Activated T-helper 1 cell treated with anti-CD3 and anti-CD28 coated beads, Interleukin-12 subunit alpha, Interleukin-12 subunit beta, Interleukin-2, Interleukin-4 antibody, amounts not matched to agents 30 ng/mL and 10 ng/mL and 1 ng/mL, durations not matched to agents 14 hours and 24 hours and 36 hours (primary cell): ENCODE measurements at regions of chr6 and their contacts with region 1.

Region 1: GRCh38 chr6:15245361-15246216 is at the start of gene JARID2:
- DNase-seq: peak; percentile 92
- H3K4me3 Mint-ChIP-seq: peak within 1 kb of the TSS; percentile 98
- H3K27ac Mint-ChIP-seq: peak within 1 kb of the TSS; percentile 96
- H3K4me1 Mint-ChIP-seq: peaks cover 17% of the 10 kb centered on the region
- H3K27me3 Mint-ChIP-seq: no peaks in the 10 kb centered on the region
- total RNA-seq, gene JARID2: 60.5 and 62.5 TPM in 2 replicates

Region 2: GRCh38 chr6:14075095-14075503 is 1170.5 kb before region 1 on chr6:
- intact Hi-C with region 1: loop called (anchors 5 kb)
- DNase-seq: peak; percentile 25
- H3K4me3 Mint-ChIP-seq: peak overlapping the region; percentile 84
- H3K27ac Mint-ChIP-seq: peak overlapping the region; percentile 94
- H3K4me1 Mint-ChIP-seq: peaks cover 68% of the 10 kb centered on the region
- H3K27me3 Mint-ChIP-seq: no peaks in the 10 kb centered on the region

Region 3: GRCh38 chr6:14276667-14277404 is 968.8 kb before region 1 on chr6:
- intact Hi-C with region 1: loop called (anchors 5 kb)
- DNase-seq: peak; percentile 31
- H3K4me3 Mint-ChIP-seq: peak overlapping the region; percentile 24
- H3K27ac Mint-ChIP-seq: peak overlapping the region; percentile 72
- H3K4me1 Mint-ChIP-seq: peaks cover 33% of the 10 kb centered on the region
- H3K27me3 Mint-ChIP-seq: no peaks in the 10 kb centered on the region

Region 4: GRCh38 chr6:14542670-14543366 is 702.8 kb before region 1 on chr6:
- intact Hi-C with region 1: loop called (anchors 5 kb)
- DNase-seq: peak; percentile 10
- H3K4me3 Mint-ChIP-seq: no peak overlapping the region
- H3K27ac Mint-ChIP-seq: peak overlapping the region; percentile 64
- H3K4me1 Mint-ChIP-seq: peaks cover 26% of the 10 kb centered on the region
- H3K27me3 Mint-ChIP-seq: peaks cover 1% of the 10 kb centered on the region

Region 5: DNA sequence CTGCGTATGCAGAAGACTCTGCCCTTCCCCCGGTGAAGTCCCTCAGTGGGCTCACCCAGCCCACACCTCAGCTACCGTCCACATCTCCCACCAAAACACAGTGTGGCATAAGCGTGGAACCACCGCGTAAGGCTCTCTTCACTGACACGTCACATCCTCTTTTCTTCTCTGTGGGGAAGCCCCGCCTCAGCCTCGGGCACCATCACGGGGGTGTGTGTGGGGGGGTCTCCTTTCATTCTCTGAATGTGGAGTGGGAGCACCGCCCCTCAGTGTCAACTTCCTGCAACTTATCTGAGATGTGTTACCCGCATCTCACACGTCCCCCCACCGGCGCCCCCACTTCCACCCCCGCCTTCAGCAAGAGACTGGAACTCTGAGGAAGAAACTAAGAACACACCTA is 388.1 kb before region 1 on chr6:
- intact Hi-C with region 1: loop called (anchors 1 kb)
- DNase-seq: peak; percentile 42
- H3K4me3 Mint-ChIP-seq: peak overlapping the region; percentile 51
- H3K27ac Mint-ChIP-seq: peak overlapping the region; percentile 96
- H3K4me1 Mint-ChIP-seq: peaks cover 42% of the 10 kb centered on the region
- H3K27me3 Mint-ChIP-seq: no peaks in the 10 kb centered on the region

Region 6: GRCh38 chr6:15090145-15090579 is 155.4 kb before region 1 on chr6:
- intact Hi-C with region 1: no loop called
- DNase-seq: no peak
- H3K4me3 Mint-ChIP-seq: no peak overlapping the region
- H3K27ac Mint-ChIP-seq: no peak overlapping the region
- H3K4me1 Mint-ChIP-seq: no peaks in the 10 kb centered on the region
- H3K27me3 Mint-ChIP-seq: peaks cover 3% of the 10 kb centered on the region

Region 7: GRCh38 chr6:15184441-15184861 is 61.1 kb before region 1 on chr6:
- intact Hi-C with region 1: loop called (anchors 1 kb)
- DNase-seq: peak; percentile 25
- H3K4me3 Mint-ChIP-seq: no peak overlapping the region
- H3K27ac Mint-ChIP-seq: peak overlapping the region; percentile 94
- H3K4me1 Mint-ChIP-seq: peaks cover 16% of the 10 kb centered on the region
- H3K27me3 Mint-ChIP-seq: no peaks in the 10 kb centered on the region

Region 8: DNA sequence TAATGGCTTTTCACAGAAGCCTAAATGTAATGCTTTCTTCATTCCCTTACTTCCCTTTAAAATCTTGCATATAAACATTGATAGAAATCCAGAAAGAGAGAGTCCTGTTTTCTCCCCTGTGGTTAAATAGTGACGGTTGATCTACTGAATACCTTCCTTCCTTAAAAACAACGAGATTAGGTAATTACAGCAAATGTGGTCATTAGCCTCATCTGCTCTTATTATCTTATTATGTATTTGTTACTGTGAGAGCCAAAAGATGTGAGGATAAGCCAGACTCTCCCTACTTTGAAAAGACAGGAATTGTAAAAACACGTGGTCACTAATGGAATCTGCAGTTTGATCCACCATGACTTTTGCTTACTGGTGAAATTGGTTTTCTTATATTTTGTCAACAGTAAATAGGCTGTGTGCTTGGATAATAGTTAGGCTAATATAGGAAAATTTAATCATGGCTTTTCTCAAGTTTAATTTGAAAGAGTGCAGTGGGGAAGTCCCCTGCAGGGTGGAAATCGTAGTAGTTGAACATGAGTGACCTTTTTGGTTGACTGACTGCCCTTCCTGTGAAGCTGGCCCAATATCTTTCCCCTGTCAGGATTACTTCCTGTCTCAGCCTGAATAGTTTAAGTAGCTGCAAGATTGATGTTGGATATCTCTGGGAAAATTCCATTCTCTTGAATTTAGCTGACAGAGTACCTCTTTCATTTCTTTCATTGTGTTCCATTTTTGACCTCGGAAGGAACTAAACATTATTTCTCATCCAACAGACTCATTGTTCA is 63.0 kb after region 1 on chr6:
- intact Hi-C with region 1: no loop called
- DNase-seq: no peak
- H3K4me3 Mint-ChIP-seq: peak overlapping the region; percentile 59
- H3K27ac Mint-ChIP-seq: peak overlapping the region; percentile 84
- H3K4me1 Mint-ChIP-seq: peaks cover 85% of the 10 kb centered on the region
- H3K27me3 Mint-ChIP-seq: no peaks in the 10 kb centered on the region

Region 9: DNA sequence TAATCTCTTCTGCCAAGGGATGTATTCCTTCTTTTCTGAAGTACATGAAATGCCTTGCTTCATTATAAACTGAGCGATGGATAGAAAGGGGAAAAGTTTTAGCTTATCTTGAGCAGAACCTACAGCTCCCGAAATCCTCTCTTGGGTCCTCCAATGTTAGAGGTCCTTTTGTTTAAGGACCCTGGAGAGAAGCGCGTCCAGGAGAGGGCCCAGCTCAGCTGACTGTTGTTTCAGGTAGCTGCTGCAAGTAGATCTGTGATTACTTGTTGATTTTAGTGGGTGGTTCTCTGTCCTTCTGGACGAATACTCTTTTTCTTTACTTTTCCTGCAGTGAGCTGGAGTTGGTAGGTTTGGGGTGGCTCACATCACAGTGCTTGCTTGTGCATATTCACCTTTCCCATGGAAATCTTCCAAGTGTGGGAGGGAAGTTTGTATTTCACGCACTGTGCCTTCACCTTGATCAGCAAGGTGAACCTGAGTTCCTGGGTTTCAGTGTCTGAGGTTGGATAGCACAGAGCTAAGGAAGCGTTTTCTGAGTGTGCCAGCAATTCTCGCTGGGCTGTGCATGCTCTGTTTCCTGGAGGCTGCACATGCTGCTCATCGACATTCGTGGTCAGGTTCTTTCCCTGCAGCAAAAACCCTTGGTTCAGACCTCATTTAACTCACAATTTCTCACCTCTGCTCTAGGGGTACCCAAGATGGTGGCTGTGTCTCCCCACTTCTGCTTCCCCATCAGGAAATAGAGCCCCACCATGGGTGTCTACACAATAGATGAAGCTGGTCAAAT is 176.6 kb after region 1 on chr6:
- intact Hi-C with region 1: loop called (anchors 1 kb)
- DNase-seq: peak; percentile 50
- H3K4me3 Mint-ChIP-seq: peak overlapping the region; percentile 59
- H3K27ac Mint-ChIP-seq: peak overlapping the region; percentile 83
- H3K4me1 Mint-ChIP-seq: peaks cover 80% of the 10 kb centered on the region
- H3K27me3 Mint-ChIP-seq: no peaks in the 10 kb centered on the region